Psoas muscle (tissue), 8 donors: ENCODE measurements at regions of chr2 and their contacts with region 1.

Region 1: GRCh38 chr2:120934574-120935340 is 199.1 kb downstream of the GLI2 start:
- DNase-seq: peak; percentile 61 to 70
- ATAC-seq: peak; percentile 72 to 81 (median 77)
- H3K4me3 ChIP-seq: no peak overlapping the region
- H3K27ac ChIP-seq: peak overlapping the region; percentile 2
- H3K4me1 ChIP-seq: peaks cover 69% of the 10 kb centered on the region
- H3K27me3 ChIP-seq: no peaks in the 10 kb centered on the region
- CTCF ChIP-seq: no peak

Region 2: GRCh38 chr2:120735746-120736170 is 199.0 kb before region 1 on chr2 and contains the start of gene GLI2:
- intact Hi-C with region 1: loop called in 1 of 2 experiments (anchors 5 kb)
- DNase-seq: peak; percentile 74 to 86
- ATAC-seq: peak; percentile 86 to 94 (median 91)
- H3K4me3 ChIP-seq: peak within 1 kb of the TSS; percentile 69
- H3K27ac ChIP-seq: peak within 1 kb of the TSS; percentile 46
- H3K4me1 ChIP-seq: peaks cover 10% of the 10 kb centered on the region
- H3K27me3 ChIP-seq: peaks cover 0 to 68% (median 31%) of the 10 kb centered on the region in 3 donors
- CTCF ChIP-seq: peak; percentile 67
- total RNA-seq, gene GLI2: 0.66 to 2.4 (median 0.76) TPM

Region 3: DNA sequence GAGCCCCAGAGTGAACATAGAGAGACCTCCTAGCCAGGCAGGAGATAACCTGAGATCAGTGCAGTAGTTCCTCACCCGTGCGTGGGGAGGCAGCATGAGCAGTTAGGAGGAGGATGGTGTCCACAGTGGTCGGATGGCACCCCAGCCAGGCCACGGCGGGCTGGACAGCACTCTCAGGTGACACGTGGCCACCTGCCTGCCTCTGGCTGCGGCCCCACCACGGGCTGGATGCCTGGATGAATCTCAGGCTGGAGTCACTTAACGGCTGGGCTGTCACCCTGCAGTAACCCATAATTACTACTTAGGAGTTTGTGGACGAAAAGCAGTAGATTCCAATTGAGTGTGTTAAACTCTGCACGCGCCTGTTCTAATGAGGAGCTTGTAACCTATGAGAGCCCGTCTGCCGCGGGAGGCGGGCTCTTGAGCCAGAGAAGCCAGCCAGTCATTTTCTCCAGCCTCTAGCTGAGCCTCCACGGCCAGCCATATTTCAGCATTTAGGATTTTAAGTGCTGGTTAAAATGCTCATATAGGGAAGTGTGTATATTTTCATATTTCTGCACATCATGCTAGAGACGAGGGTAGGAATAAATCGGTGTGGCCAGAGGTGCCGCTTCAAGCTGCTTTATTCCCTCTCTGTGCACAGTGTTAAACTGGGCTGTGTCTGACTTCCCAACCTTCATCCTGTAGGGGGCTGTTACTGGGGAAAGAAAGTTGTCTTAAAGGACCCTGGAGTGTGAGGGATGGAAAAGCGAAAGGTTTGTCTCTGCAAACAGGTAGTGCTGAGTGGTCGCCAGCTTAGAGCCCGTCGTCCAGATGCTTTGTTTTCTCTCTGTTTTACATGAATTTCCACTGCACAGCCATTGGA is 55.1 kb before region 1 on chr2:
- intact Hi-C with region 1: loop called (anchors 5 kb)
- DNase-seq: peak in 1 of 2 donors; percentile 78
- ATAC-seq: peak; percentile 73 to 89 (median 84)
- H3K4me3 ChIP-seq: peak overlapping the region; percentile 24
- H3K27ac ChIP-seq: peak overlapping the region; percentile 31
- H3K4me1 ChIP-seq: peaks cover 32% of the 10 kb centered on the region
- H3K27me3 ChIP-seq: no peaks in the 10 kb centered on the region
- CTCF ChIP-seq: peak; percentile 39

Region 4: GRCh38 chr2:120978359-120979050 is 43.7 kb after region 1 on chr2:
- intact Hi-C with region 1: no loop called
- DNase-seq: no peak
- ATAC-seq: no peak
- H3K4me3 ChIP-seq: no peak overlapping the region
- H3K27ac ChIP-seq: no peak overlapping the region
- H3K4me1 ChIP-seq: no peaks in the 10 kb centered on the region
- H3K27me3 ChIP-seq: no peaks in the 10 kb centered on the region
- CTCF ChIP-seq: no peak